HEK293 (cell line): ENCODE measurements at regions of chr16 and their contacts with region 1.

Region 1: GRCh38 chr16:52191531-52192134 is 355.3 kb downstream of the TOX3 start:
- H3K4me3 ChIP-seq: no peak overlapping the region
- H3K27ac ChIP-seq: no peak overlapping the region
- H3K4me1 ChIP-seq: no peaks in the 10 kb centered on the region
- CTCF ChIP-seq: peak; percentile 64

Region 2: DNA sequence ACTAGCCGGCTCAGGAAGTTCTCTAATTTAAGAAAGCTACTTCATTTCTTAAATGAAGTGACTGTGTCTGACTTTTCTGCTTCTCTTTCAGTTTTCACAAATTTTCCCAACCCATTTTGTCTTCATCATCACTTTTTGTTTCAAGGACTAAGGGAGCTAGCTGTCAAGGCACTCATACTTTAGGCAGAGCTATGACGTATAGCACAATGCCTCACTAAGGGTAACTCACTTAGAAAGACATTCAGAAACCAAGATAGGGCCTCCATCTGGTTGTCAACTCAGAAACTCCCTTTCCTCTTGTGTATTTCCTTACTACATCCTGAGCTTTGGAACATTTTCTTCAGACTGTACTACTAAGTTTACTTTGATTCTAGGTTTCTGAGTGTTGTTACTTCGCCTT is 42.6 kb before region 1 on chr16:
- CTCF ChIA-PET with region 1: no interaction called
- POLR2A ChIA-PET with region 1: no interaction called
- H3K4me3 ChIP-seq: no peak overlapping the region
- H3K27ac ChIP-seq: no peak overlapping the region
- H3K4me1 ChIP-seq: no peaks in the 10 kb centered on the region
- CTCF ChIP-seq: no peak

Region 3: GRCh38 chr16:52203096-52203495 is 11.5 kb after region 1 on chr16:
- CTCF ChIA-PET with region 1: interaction called, 26 read pairs
- POLR2A ChIA-PET with region 1: no interaction called
- H3K4me3 ChIP-seq: no peak overlapping the region
- H3K27ac ChIP-seq: no peak overlapping the region
- H3K4me1 ChIP-seq: no peaks in the 10 kb centered on the region
- CTCF ChIP-seq: no peak

Region 4: GRCh38 chr16:52861614-52862022 is 670.0 kb after region 1 on chr16:
- CTCF ChIA-PET with region 1: interaction called, 37 read pairs
- POLR2A ChIA-PET with region 1: no interaction called
- H3K4me3 ChIP-seq: no peak overlapping the region
- H3K27ac ChIP-seq: no peak overlapping the region
- H3K4me1 ChIP-seq: no peaks in the 10 kb centered on the region
- CTCF ChIP-seq: 0 out of 2 replicates have a peak, but pooled peaks have one; percentile 38